Panc1 (cell line): ENCODE measurements at regions of chr21 and their contacts with region 1.

Region 1: GRCh38 chr21:28745131-28746016 is 247.3 kb downstream of the LTN1 start:
- DNase-seq: peak; percentile 63
- ATAC-seq: peak; percentile 94
- H3K4me3 ChIP-seq: peak overlapping the region; percentile 28 to 52
- H3K27ac ChIP-seq: peak overlapping the region; percentile 53; the same call in 1 of the 2 replicates
- H3K4me1 ChIP-seq: no peaks in the 10 kb centered on the region; the same call in 1 of the 2 replicates
- H3K27me3 ChIP-seq: no peaks in the 10 kb centered on the region
- CTCF ChIP-seq: peak; percentile 74

Region 2: DNA sequence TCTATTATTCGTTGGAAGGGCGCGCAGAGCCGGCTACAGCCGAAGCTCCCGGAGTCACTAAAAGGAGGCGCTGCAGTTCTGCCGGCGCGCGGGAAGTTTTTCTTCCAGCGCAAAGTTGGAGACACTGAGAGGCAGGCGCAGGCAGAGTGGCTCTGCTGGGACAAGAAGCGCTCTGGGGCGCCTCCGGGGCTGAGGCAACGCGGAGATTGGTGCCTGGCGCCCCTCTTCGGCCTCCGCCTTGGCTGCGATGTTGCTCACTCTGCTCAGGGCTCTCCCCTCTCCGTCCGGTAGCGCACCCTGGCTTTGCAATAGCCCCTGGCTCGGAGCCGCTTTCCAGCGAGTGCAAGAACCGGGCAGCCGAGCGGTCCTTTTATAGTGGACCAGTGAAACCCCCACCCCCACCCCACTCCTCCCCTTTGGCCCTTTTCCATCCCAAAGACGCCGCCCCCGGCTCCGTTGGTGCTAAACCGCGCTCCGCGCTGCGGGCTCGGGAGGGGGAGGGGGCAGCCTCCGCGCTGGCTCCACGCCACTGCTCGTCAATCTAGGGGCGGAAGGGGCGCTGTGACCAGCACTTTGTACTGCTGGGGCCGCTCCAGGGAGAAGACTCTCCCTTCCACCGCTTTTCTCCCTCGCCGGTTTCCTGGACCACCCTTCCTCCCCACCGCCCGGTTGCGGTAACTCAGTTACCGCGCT is 1900.2 kb before region 1 on chr21 and contains the start of gene ADAMTS1:
- CTCF ChIA-PET with region 1: no interaction called
- POLR2A ChIA-PET with region 1: no interaction called
- in situ Hi-C with region 1: no loop called
- intact Hi-C with region 1: loop called (anchors 5 kb)
- DNase-seq: no peak
- ATAC-seq: peak; percentile 63
- H3K4me3 ChIP-seq: peak within 1 kb of the TSS; percentile 48 to 67
- H3K27ac ChIP-seq: no peak within 1 kb of the TSS
- H3K4me1 ChIP-seq: no peaks in the 10 kb centered on the region; the same call in 1 of the 2 replicates
- H3K27me3 ChIP-seq: peaks cover 5% of the 10 kb centered on the region; the same call in 1 of the 2 replicates
- CTCF ChIP-seq: peak; percentile 8; the same call in 1 of the 2 replicates
- total RNA-seq, gene ADAMTS1: 3.3 TPM

Region 3: DNA sequence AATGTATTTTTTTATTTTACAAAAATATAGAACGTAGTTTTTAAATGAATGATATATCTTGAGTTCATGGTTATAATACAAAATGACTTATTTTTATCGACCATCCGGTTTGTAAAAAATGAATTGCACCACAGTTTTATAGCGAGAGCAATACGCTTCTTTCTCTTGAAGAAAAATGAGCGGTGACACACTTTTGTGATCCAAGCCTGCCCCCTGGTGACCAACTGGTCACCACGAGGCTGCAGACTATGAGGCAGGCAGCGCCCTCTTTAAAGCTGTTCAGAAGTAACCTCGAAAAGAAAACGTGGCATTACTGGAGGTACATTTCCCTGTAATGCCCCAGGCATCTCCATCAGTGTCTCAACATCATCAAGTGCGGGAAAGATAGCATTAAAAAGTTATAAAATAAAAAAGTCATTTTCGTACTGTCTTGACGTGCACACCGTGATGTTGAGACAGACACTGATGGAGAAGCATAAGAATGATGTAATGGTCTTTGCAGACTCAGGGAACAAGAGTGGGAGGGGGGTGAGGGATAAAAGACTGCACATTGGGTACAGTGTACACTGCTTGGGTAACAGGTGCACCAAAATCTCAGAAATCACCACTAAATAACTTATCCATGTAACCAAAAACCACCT is 1044.3 kb before region 1 on chr21:
- CTCF ChIA-PET with region 1: interaction called, 8 read pairs
- POLR2A ChIA-PET with region 1: no interaction called
- in situ Hi-C with region 1: no loop called
- intact Hi-C with region 1: loop called (anchors 10 kb)
- DNase-seq: peak; percentile 46
- ATAC-seq: peak; percentile 70
- H3K4me3 ChIP-seq: no peak overlapping the region
- H3K27ac ChIP-seq: no peak overlapping the region
- H3K4me1 ChIP-seq: no peaks in the 10 kb centered on the region
- H3K27me3 ChIP-seq: no peaks in the 10 kb centered on the region
- CTCF ChIP-seq: peak; percentile 77

Region 4: DNA sequence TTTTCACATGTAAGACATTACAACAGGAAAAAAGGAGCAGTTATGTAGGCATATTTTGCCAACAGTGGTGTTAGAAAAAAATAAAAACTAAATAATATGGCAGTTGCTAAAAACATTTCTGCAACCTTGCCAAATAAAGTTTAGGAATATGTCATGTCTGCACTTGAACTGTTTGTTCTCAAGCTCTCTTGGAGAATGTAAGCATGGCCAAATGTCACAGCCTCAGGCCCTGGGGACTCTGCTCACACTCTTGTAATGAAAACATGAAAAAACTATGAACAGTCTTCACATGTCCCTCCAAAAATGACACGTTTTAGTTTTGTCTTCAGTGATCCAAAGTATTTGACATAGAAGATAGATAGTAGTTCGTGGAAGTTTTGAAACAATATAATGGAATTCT is 506.0 kb before region 1 on chr21:
- CTCF ChIA-PET with region 1: no interaction called
- POLR2A ChIA-PET with region 1: no interaction called
- in situ Hi-C with region 1: no loop called
- intact Hi-C with region 1: no loop called
- DNase-seq: no peak
- ATAC-seq: no peak
- H3K4me3 ChIP-seq: no peak overlapping the region
- H3K27ac ChIP-seq: no peak overlapping the region
- H3K4me1 ChIP-seq: no peaks in the 10 kb centered on the region
- H3K27me3 ChIP-seq: no peaks in the 10 kb centered on the region
- CTCF ChIP-seq: no peak

Region 5: GRCh38 chr21:28317177-28317950 is 428.0 kb before region 1 on chr21:
- CTCF ChIA-PET with region 1: no interaction called
- POLR2A ChIA-PET with region 1: no interaction called
- in situ Hi-C with region 1: no loop called
- intact Hi-C with region 1: no loop called
- DNase-seq: no peak
- ATAC-seq: no peak
- H3K4me3 ChIP-seq: no peak overlapping the region
- H3K27ac ChIP-seq: no peak overlapping the region
- H3K4me1 ChIP-seq: no peaks in the 10 kb centered on the region
- H3K27me3 ChIP-seq: no peaks in the 10 kb centered on the region
- CTCF ChIP-seq: no peak

Region 6: DNA sequence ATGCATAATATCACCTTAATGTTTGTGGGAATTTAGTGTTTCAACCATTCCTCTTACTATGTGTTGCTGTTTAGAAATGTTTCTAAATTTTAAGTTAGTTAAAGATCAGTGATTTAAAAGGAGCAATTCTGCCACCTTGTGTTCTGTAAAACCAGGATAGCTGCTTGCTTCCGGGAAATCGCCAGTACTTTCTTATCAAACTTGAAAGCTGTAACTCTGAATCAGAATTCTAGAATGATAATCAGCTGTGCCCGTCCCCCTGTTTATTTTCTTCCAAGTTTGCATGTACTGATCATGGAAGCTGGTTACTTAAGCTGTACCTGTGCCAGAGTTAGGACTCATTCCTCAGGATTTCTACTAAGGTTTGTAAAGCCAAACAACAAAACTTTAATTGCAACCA is 409.1 kb before region 1 on chr21:
- CTCF ChIA-PET with region 1: no interaction called
- POLR2A ChIA-PET with region 1: no interaction called
- in situ Hi-C with region 1: no loop called
- intact Hi-C with region 1: loop called (anchors 10 kb)
- DNase-seq: no peak
- ATAC-seq: no peak
- H3K4me3 ChIP-seq: no peak overlapping the region
- H3K27ac ChIP-seq: no peak overlapping the region
- H3K4me1 ChIP-seq: no peaks in the 10 kb centered on the region
- H3K27me3 ChIP-seq: no peaks in the 10 kb centered on the region
- CTCF ChIP-seq: peak; percentile 11; the same call in 1 of the 2 replicates

Region 7: GRCh38 chr21:28516991-28517592 is 228.3 kb before region 1 on chr21:
- CTCF ChIA-PET with region 1: interaction called, 5 read pairs
- POLR2A ChIA-PET with region 1: no interaction called
- in situ Hi-C with region 1: no loop called
- intact Hi-C with region 1: loop called (anchors 5 kb)
- DNase-seq: peak; percentile 15
- ATAC-seq: peak; percentile 87
- H3K4me3 ChIP-seq: no peak overlapping the region
- H3K27ac ChIP-seq: no peak overlapping the region
- H3K4me1 ChIP-seq: no peaks in the 10 kb centered on the region
- H3K27me3 ChIP-seq: no peaks in the 10 kb centered on the region
- CTCF ChIP-seq: peak; percentile 75

Region 8: GRCh38 chr21:28943631-28944030 is 198.3 kb after region 1 on chr21:
- CTCF ChIA-PET with region 1: interaction called, 4 read pairs
- POLR2A ChIA-PET with region 1: no interaction called
- in situ Hi-C with region 1: no loop called
- intact Hi-C with region 1: loop called (anchors 5 kb)
- DNase-seq: no peak
- ATAC-seq: no peak
- H3K4me3 ChIP-seq: no peak overlapping the region
- H3K27ac ChIP-seq: peak overlapping the region; percentile 17; the same call in 1 of the 2 replicates
- H3K4me1 ChIP-seq: peaks cover 6% of the 10 kb centered on the region; the same call in 1 of the 2 replicates
- H3K27me3 ChIP-seq: no peaks in the 10 kb centered on the region
- CTCF ChIP-seq: no peak

Region 9: DNA sequence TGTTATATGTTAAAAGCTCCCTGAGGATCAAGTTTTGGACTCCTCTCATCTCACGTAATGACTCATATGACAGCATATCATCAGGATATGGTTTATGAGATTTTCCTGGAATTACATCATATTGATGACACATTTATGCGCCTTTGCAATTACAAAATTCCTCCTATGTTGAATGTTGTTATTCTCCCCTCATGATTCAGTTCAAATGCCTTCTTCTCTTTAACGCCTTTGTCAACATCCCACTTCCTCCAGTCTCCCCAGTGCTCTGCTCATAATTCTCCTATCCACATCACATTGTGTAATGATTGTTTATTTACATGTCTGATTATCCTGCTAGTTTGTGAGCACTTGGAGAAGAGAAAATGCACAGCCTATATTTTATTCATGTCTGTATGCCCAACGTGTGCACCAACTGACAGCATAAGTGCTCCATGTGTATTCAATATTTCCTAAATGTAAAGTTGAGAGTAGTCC is 472.5 kb after region 1 on chr21:
- CTCF ChIA-PET with region 1: no interaction called
- POLR2A ChIA-PET with region 1: no interaction called
- in situ Hi-C with region 1: no loop called
- intact Hi-C with region 1: no loop called
- DNase-seq: peak; percentile 90
- ATAC-seq: peak; percentile 66; the same call in 1 of the 2 replicates
- H3K4me3 ChIP-seq: no peak overlapping the region
- H3K27ac ChIP-seq: no peak overlapping the region
- H3K4me1 ChIP-seq: no peaks in the 10 kb centered on the region
- H3K27me3 ChIP-seq: no peaks in the 10 kb centered on the region
- CTCF ChIP-seq: no peak